ENCODE measurements at regions of chr17 and their contacts with region 1.

Region 1: DNA sequence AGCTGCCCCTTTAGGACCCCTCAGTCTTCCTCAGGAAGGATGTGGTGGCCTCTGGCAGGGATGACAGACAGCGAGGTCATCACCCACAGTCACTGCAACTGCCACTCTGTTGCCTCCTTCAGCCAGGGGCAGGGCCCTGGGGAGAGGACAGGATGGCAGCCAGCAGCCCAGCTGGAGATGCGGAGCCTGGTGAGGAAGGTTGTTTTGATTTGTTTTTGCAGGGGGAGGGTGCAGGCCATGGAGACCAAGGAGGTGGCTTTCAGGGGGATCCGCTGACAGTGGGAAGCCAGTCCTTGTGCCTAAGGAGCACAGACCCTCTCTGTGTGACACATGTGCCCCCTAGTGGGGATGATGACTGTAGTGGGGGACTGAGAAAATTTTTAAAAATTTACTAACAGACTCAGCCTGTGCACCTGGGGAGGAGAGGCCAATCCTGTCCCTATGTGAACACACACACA is 7.4 kb downstream of the PRCD start:
- DNase-seq: peak; percentile 72
- H3K4me3 Mint-ChIP-seq: no peak overlapping the region
- H3K27ac Mint-ChIP-seq: no peak overlapping the region
- H3K4me1 Mint-ChIP-seq: peaks cover 9% of the 10 kb centered on the region
- H3K27me3 Mint-ChIP-seq: peaks cover 31% of the 10 kb centered on the region
- CTCF ChIP-seq: peak; percentile 65

Region 2: GRCh38 chr17:76506408-76507349 is 40.5 kb before region 1 on chr17:
- CTCF ChIA-PET with region 1: no interaction called
- intact Hi-C with region 1: no loop called
- DNase-seq: peak; percentile 90
- H3K4me3 Mint-ChIP-seq: no peak overlapping the region
- H3K27ac Mint-ChIP-seq: no peak overlapping the region
- H3K4me1 Mint-ChIP-seq: peaks cover 4% of the 10 kb centered on the region
- H3K27me3 Mint-ChIP-seq: peaks cover 39% of the 10 kb centered on the region
- CTCF ChIP-seq: peak; percentile 93

Region 3: DNA sequence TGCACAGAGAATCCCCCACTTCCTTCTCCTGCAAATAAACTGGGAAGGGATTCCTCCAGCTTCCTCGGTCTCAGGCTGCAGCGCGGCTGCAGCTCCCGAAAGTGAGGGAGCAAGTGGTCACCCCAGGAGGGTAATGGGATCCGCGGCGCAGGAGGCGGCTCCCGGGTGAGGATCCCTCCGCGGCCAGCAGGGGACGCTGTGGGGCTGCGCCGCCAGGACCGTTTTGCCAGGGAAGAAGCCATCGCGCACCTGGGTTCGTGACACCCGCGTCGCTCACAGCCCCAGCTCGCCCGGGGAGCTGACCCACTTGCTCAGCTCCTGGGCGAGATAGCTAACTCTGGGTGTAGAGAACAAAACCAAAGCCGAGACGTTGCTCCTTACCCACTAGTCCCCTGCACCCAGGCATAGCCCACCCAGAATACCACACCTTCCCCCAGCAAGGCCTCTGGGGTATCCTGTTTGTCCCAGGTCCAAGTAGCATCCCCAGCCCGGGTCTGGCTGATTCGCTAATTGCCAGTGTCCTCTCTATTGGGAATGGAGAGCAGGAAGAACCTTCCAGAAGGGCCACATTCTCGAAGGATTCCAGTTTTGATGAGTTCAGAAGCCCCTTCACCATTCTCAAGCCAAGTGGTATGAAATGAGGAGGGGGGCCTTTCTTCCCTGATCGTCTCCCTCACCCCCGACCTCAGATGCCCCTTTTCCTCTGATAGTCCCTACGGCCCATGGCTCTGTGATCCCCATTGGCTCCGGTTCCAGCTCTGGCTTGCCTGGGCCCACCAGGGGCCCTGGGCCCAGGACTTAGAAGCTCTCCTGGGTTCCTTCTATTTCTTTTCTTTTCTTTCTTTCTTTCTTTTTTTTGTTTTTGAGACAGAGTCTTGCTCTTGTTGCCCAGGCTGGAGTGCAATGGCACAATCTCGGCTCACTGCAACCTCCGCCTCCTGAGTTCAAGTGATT is 23.9 kb before region 1 on chr17:
- CTCF ChIA-PET with region 1: interaction called, 4 read pairs
- intact Hi-C with region 1: loop called (anchors 2 kb)
- DNase-seq: peak; percentile 88
- H3K4me3 Mint-ChIP-seq: no peak overlapping the region
- H3K27ac Mint-ChIP-seq: no peak overlapping the region
- H3K4me1 Mint-ChIP-seq: peaks cover 23% of the 10 kb centered on the region
- H3K27me3 Mint-ChIP-seq: peaks cover 47% of the 10 kb centered on the region
- CTCF ChIP-seq: peak; percentile 97

Measured in Calu3 (cell line).